ENCODE measurements at regions of chr3 and their contacts with region 1.

Region 1: GRCh38 chr3:52685709-52686691 is at the starts of genes GNL3 and PBRM1:
- DNase-seq: peak; percentile 84 to 98 (median 89)
- ATAC-seq: peak; percentile 85
- H3K4me3 ChIP-seq: peak within 1 kb of the TSS; percentile 81
- H3K4me3 Mint-ChIP-seq: peak within 1 kb of the TSS; percentile 100
- H3K27ac ChIP-seq: peak within 1 kb of the TSS; percentile 85 to 93
- H3K27ac Mint-ChIP-seq: peak within 1 kb of the TSS; percentile 97
- H3K4me1 ChIP-seq: peaks cover 21% of the 10 kb centered on the region
- H3K4me1 Mint-ChIP-seq: peaks cover 57% of the 10 kb centered on the region
- H3K27me3 ChIP-seq: no peaks in the 10 kb centered on the region
- H3K27me3 Mint-ChIP-seq: no peaks in the 10 kb centered on the region
- CTCF ChIP-seq: no peak
- total RNA-seq, gene GNL3: 104 to 106 TPM
- total RNA-seq, gene PBRM1: 47.6 to 48.1 TPM

Region 2: DNA sequence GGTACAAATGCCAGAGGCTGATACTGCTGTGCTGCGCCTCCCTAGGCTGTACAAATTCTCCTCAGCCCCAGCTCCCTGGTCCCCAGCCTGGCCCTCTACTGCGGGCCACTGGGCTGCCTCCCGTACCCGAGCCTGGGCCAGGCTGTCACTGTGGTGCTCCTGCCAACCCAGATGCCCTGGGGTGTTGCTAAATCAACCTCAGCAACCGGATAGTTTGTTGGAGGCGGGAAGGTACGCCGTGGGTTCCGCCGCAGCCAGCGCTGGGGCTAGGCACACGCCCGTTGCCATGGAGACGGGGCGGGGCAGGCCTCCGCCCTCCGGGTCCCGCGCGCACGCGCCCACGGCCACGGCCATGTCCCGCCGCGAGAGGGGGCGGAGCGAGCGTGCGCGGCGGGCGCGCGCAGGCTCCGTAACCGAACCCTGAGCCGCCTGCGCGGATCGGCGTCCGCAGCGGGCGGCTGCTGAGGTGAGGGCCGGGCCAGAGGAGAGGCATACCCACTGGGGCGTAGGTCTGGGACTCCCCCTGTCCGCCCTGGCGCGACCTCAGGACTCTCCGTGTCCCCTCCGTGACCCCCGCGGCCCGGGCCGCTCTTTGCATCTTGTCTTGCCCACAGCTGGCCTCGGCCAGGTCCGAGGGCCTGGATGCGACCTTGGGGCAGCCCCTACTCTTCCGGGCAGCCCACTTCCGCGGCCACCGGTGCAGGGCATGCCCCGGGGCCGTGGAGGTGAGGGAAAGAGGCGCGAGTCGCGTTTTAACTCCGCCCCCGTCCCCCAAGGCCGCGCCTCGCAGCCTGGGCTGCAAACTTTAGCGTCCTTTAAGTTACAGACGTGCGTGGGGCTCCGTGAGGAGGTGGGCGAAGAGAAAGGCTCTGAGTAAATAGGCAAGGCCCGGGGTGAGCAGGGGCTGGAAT is 1014.9 kb before region 1 on chr3 and contains the start of gene TEX264:
- CTCF ChIA-PET with region 1: no interaction called
- POLR2A ChIA-PET with region 1: no interaction called
- intact Hi-C with region 1: loop called in 1 of 2 experiments (anchors 2 kb)
- DNase-seq: peak; percentile 88 to 100 (median 95)
- ATAC-seq: peak; percentile 75
- H3K4me3 ChIP-seq: peak within 1 kb of the TSS; percentile 98
- H3K4me3 Mint-ChIP-seq: peak within 1 kb of the TSS; percentile 94
- H3K27ac ChIP-seq: peak within 1 kb of the TSS; percentile 83 to 91
- H3K27ac Mint-ChIP-seq: peak within 1 kb of the TSS; percentile 97
- H3K4me1 ChIP-seq: peaks cover 67% of the 10 kb centered on the region
- H3K4me1 Mint-ChIP-seq: peaks cover 80% of the 10 kb centered on the region
- H3K27me3 ChIP-seq: no peaks in the 10 kb centered on the region
- H3K27me3 Mint-ChIP-seq: no peaks in the 10 kb centered on the region
- CTCF ChIP-seq: no peak
- total RNA-seq, gene TEX264: 24.9 to 25.9 TPM

Region 3: DNA sequence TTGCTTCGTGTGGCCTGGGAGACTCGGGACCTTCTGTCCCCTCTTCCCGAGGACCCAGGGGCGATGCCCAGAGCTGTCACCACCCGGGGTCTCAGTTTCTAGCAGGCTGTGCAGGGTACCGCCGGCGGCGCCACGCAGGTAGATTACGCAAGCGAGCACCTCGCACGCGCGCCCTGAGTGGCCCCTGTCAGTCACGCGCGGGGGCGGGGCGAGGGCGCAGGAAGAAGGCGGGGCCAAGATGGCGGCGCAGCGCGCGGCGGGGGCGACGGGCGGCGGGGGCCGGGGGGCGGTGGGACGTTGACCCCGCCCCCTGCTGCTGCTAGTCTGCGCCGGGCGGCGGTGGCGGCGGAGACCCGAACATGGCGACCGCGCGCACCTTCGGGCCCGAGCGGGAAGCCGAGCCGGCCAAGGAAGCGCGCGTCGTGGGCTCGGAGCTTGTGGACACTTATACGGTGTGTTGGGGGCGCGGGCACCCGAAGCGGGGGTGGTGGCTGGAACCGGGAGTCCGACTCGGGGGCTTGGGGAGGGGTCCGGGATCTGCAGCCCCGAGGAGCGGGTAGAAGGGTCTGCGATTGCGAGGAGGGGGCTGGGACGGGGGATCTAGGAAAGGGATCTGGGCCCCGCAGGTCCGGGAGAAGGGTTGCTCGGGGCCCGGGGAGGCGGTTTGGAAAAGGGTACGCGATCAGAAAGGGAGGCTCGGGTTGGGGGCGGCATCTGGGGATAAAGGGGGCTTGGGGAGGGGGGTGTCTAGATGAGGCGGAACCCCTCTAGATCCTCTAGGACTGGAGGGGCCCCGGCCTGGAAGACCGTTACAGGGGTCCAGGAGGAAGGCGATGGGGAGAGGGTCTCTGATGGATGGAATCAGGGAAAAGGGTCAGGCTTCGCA is 230.5 kb before region 1 on chr3 and contains the start of gene NISCH:
- CTCF ChIA-PET with region 1: no interaction called
- POLR2A ChIA-PET with region 1: no interaction called
- intact Hi-C with region 1: loop called in 1 of 2 experiments (anchors 5 kb)
- DNase-seq: peak; percentile 91 to 99 (median 97)
- ATAC-seq: peak; percentile 95
- H3K4me3 ChIP-seq: peak within 1 kb of the TSS; percentile 97
- H3K4me3 Mint-ChIP-seq: peak within 1 kb of the TSS; percentile 96
- H3K27ac ChIP-seq: peak within 1 kb of the TSS; percentile 81 to 85
- H3K27ac Mint-ChIP-seq: peak within 1 kb of the TSS; percentile 100
- H3K4me1 ChIP-seq: peaks cover 44% of the 10 kb centered on the region
- H3K4me1 Mint-ChIP-seq: peaks cover 43% of the 10 kb centered on the region
- H3K27me3 ChIP-seq: no peaks in the 10 kb centered on the region
- H3K27me3 Mint-ChIP-seq: no peaks in the 10 kb centered on the region
- CTCF ChIP-seq: no peak
- total RNA-seq, gene NISCH: 160 to 163 TPM

Region 4: DNA sequence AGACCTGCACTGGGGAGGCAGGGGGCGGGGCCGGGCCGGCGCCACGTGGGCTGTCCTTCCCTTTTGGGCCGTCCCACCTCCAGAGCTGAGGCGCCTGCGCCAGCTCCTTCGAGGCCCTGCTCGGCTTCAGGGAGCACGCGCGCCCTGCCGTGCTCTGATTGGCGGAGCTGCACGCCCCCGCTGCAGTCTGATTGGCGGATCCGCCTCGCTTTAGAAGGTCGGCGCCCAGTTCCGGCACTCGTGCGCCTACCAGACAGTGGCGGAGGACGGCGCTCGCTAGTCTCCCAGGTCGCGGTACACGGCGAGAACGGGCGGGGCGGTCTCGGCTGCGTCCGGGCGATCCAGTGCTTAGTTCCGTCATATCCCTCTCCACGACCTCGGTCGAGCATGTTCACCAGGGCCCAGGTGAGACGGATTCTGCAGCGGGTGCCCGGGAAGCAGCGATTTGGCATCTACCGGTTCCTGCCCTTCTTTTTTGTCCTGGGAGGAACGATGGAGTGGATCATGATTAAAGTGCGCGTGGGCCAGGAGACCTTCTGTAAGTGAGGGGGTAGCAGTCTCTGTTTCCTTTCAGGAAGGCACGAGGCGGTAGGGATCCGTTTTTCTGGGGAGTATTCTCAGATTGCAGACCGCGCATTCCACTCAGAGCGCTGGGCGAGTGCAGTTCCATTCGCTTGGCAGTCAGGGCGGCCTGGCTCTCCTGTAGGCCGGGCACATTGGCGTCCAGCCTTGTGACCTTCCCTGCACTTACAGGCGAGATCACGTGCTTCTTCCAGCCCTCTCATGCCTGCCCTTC is 149.4 kb before region 1 on chr3 and contains the start of gene UQCC5:
- CTCF ChIA-PET with region 1: no interaction called
- POLR2A ChIA-PET with region 1: interaction called, 3 read pairs
- intact Hi-C with region 1: loop called in 1 of 2 experiments (anchors 2 kb)
- DNase-seq: peak; percentile 93 to 99 (median 96)
- ATAC-seq: peak; percentile 89
- H3K4me3 ChIP-seq: peak within 1 kb of the TSS; percentile 92
- H3K4me3 Mint-ChIP-seq: peak within 1 kb of the TSS; percentile 99
- H3K27ac ChIP-seq: peak within 1 kb of the TSS; percentile 71 to 83
- H3K27ac Mint-ChIP-seq: peak within 1 kb of the TSS; percentile 95
- H3K4me1 ChIP-seq: peaks cover 64% of the 10 kb centered on the region
- H3K4me1 Mint-ChIP-seq: peaks cover 60% of the 10 kb centered on the region
- H3K27me3 ChIP-seq: peaks cover 0 to 3% of the 10 kb centered on the region in 2 experiments
- H3K27me3 Mint-ChIP-seq: no peaks in the 10 kb centered on the region
- CTCF ChIP-seq: peak; percentile 22
- total RNA-seq, gene UQCC5: 2.8 to 8.3 TPM

Region 5: DNA sequence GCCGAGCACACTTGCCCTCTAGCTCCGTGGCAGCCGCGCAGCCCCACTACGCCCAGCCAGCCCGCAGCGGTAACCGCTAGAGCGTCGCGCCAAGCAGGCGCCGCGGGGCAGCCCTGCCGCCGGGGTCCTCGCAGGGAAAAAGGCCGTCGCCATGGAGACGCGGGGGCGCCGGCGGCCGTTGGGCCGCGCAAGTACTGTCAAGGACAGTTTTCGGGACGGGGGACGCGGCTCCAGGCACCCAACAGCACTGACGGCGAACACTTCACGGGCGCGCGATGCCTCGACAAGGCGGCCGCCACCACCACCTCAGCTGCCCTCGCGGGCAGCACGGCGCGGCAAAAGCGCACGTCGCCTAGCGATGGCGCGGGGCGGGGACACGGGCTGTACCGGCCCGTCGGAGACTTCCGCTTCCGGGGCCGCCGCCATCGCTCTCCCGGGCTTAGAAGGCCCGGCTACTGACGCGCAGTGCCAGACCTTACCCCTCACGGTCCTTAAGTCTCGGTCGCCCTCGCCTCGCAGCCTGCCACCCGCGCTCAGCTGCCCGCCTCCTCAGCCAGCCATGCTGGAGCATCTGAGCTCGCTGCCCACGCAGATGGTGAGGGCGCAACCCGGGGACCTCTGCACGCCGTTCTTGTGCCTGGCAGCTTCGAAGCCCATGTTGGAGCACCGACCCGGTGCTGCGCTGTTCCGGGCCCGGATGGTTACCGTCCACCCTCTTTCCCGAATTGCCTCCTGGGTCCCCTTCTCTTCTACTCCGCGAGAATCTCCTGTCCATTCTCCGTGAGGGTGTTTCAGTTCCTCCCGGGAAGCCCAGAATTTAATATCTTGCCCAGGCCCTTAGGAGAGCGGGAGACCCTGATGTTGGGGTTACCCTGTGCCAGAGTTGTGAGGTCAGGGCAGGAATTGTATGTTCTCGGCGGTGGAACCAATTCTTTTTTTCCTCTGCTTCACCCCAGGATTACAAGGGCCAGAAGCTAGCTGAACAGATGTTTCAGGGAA is 20.0 kb after region 1 on chr3 and contains the starts of genes GLT8D1 and SPCS1:
- CTCF ChIA-PET with region 1: no interaction called
- POLR2A ChIA-PET with region 1: interaction called, 13 read pairs
- intact Hi-C with region 1: loop called (anchors 1 to 2 kb)
- DNase-seq: peak; percentile 70 to 94 (median 82)
- ATAC-seq: peak; percentile 89
- H3K4me3 ChIP-seq: peak within 1 kb of the TSS; percentile 98
- H3K4me3 Mint-ChIP-seq: peak within 1 kb of the TSS; percentile 96
- H3K27ac ChIP-seq: peak within 1 kb of the TSS; percentile 86 to 90
- H3K27ac Mint-ChIP-seq: peak within 1 kb of the TSS; percentile 98
- H3K4me1 ChIP-seq: peaks cover 39% of the 10 kb centered on the region
- H3K4me1 Mint-ChIP-seq: peaks cover 40% of the 10 kb centered on the region
- H3K27me3 ChIP-seq: no peaks in the 10 kb centered on the region
- H3K27me3 Mint-ChIP-seq: no peaks in the 10 kb centered on the region
- CTCF ChIP-seq: no peak
- total RNA-seq, gene GLT8D1: 8.4 to 10.8 TPM
- total RNA-seq, gene SPCS1: 60.0 to 64.5 TPM

Region 6: GRCh38 chr3:53045518-53046170 is 359.6 kb after region 1 on chr3 and contains the start of gene SFMBT1:
- CTCF ChIA-PET with region 1: no interaction called
- POLR2A ChIA-PET with region 1: no interaction called
- intact Hi-C with region 1: loop called in 1 of 2 experiments (anchors 5 kb)
- DNase-seq: peak; percentile 55 to 93 (median 73)
- ATAC-seq: peak; percentile 50
- H3K4me3 ChIP-seq: peak within 1 kb of the TSS; percentile 91
- H3K4me3 Mint-ChIP-seq: peak within 1 kb of the TSS; percentile 95
- H3K27ac ChIP-seq: peak within 1 kb of the TSS; percentile 72 to 88
- H3K27ac Mint-ChIP-seq: peak within 1 kb of the TSS; percentile 99
- H3K4me1 ChIP-seq: peaks cover 33% of the 10 kb centered on the region
- H3K4me1 Mint-ChIP-seq: peaks cover 52% of the 10 kb centered on the region
- H3K27me3 ChIP-seq: no peaks in the 10 kb centered on the region
- H3K27me3 Mint-ChIP-seq: peaks cover 3% of the 10 kb centered on the region
- CTCF ChIP-seq: no peak
- total RNA-seq, gene SFMBT1: 54.3 to 55.9 TPM

Region 7: DNA sequence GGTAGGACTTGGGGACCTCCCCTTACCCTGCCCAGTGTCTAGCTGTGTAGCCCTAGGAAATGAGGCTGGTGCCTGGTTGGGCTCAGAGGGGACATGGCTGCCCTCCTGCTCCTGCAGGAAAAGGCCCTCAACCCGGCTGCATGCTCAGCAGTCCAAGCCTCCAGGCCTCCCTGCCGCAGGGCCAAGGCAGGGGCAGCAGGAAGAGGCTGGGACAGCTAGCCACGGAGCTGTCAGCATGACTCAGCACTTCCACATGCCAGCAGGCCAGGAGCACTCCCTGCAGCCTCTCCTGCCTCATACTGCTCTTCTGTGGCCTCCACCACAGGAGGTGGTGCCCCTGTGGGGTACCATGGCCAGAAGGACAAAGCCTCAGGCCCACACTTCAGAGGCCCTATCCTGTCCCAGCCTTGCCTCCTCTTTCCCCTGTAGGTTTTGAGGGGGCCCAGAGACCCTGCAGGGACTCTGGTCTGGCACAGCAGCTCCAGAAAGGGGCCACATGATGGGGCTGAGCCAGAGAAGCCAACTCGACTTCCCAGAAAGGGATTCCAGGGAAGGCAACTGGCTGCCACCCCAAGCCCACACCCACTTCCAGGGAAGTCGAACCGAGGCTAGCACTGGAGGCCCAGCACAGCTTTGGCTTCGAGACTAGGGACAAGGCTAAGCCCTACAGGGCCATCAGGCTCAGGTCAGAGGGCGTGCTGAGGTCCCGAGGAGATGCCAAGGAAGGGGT is 550.3 kb after region 1 on chr3:
- CTCF ChIA-PET with region 1: no interaction called
- POLR2A ChIA-PET with region 1: no interaction called
- intact Hi-C with region 1: no loop called
- DNase-seq: peak in 1 of 14 experiments; percentile 14
- ATAC-seq: no peak
- H3K4me3 ChIP-seq: no peak overlapping the region
- H3K4me3 Mint-ChIP-seq: no peak overlapping the region
- H3K27ac ChIP-seq: no peak overlapping the region
- H3K27ac Mint-ChIP-seq: no peak overlapping the region
- H3K4me1 ChIP-seq: peaks cover 3% of the 10 kb centered on the region
- H3K4me1 Mint-ChIP-seq: no peaks in the 10 kb centered on the region
- H3K27me3 ChIP-seq: no peaks in the 10 kb centered on the region
- H3K27me3 Mint-ChIP-seq: no peaks in the 10 kb centered on the region
- CTCF ChIP-seq: no peak

Region 8: DNA sequence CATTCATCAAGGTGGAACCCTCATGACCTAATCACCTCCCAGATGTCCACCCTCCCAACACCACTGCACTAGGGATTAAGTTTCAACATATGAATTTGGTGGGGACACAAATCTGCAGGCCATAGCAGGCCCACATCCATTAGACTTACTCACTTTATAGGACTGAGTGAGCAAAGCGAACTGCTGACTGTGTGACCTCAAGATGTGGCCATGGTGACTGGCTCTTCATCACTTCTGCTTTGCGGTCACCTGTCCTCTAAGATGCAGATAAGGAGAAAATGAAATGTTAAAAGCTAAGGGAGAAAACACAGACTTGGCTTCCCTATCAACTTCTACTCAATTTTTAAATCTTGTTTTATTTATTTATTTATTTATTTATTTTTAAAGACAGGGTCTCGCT is 675.9 kb after region 1 on chr3:
- CTCF ChIA-PET with region 1: no interaction called
- POLR2A ChIA-PET with region 1: no interaction called
- intact Hi-C with region 1: no loop called
- DNase-seq: no peak
- ATAC-seq: no peak
- H3K4me3 ChIP-seq: no peak overlapping the region
- H3K4me3 Mint-ChIP-seq: no peak overlapping the region
- H3K27ac ChIP-seq: no peak overlapping the region
- H3K27ac Mint-ChIP-seq: no peak overlapping the region
- H3K4me1 ChIP-seq: no peaks in the 10 kb centered on the region
- H3K4me1 Mint-ChIP-seq: no peaks in the 10 kb centered on the region
- H3K27me3 ChIP-seq: no peaks in the 10 kb centered on the region
- H3K27me3 Mint-ChIP-seq: peaks cover 12% of the 10 kb centered on the region
- CTCF ChIP-seq: no peak

Measured in CD4-positive, alpha-beta T cell (primary cell).